Head of caudate nucleus (tissue), 42 donors: ENCODE measurements at regions of chr2 and their contacts with region 1.

Region 1: GRCh38 chr2:96265840-96266679 is at the starts of genes CIAO1 and TMEM127:
- DNase-seq: peak; percentile 97 to 100 (median 99)

Region 2: DNA sequence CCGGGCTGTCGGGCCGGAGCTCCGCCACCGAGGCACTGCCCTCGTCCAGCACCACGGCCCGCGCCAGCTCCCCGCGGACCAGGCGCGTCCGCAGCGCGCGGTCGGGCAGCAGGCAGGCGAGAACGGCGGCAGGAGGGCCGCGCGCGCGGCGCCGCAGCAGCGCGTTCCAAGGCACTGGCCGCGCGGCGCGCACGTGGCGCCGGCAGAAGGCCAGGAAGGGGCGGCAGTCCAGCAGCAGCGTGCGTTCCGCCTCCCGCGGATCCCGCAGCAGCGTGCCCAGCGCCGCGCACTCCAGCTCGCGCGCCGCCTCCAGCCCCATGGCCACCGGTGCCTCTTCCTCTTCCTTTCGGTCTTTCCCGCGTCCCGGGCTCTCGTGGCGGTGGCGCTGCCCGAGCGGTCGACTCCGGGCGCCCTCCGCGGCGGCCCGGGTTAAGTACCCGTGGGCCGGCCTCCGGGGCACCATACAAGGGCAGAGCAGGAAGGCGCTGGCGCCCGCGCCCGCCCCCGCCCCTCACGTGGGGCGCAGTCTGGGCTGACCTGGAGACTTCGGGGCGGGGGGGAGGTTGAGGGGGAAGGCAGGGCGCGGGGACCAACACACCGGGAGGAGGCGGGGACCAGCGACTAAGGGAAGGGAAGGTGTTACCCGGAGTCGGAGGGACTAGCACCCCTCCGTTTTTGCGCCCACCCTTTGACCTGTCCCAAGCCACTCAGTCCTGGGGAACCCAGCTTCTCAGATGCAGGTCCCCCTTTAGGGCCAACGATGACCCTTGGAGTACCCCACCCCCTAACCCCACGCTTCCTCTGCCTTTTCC is 120.8 kb before region 1 on chr2 and contains the start of gene DUSP2:
- intact Hi-C with region 1: loop called (anchors 10 kb)
- DNase-seq: peak; percentile 19 to 82 (median 64)